ENCODE measurements at regions of chr3 and their contacts with region 1.

Region 1: GRCh38 chr3:157159762-157160657 is at the start of gene CCNL1:
- DNase-seq: peak; percentile 92
- CTCF ChIP-seq: no peak

Region 2: GRCh38 chr3:156943430-156943829 is 216.6 kb before region 1 on chr3:
- CTCF ChIA-PET with region 1: no interaction called
- POLR2A ChIA-PET with region 1: no interaction called
- DNase-seq: no peak
- CTCF ChIP-seq: no peak

Region 3: DNA sequence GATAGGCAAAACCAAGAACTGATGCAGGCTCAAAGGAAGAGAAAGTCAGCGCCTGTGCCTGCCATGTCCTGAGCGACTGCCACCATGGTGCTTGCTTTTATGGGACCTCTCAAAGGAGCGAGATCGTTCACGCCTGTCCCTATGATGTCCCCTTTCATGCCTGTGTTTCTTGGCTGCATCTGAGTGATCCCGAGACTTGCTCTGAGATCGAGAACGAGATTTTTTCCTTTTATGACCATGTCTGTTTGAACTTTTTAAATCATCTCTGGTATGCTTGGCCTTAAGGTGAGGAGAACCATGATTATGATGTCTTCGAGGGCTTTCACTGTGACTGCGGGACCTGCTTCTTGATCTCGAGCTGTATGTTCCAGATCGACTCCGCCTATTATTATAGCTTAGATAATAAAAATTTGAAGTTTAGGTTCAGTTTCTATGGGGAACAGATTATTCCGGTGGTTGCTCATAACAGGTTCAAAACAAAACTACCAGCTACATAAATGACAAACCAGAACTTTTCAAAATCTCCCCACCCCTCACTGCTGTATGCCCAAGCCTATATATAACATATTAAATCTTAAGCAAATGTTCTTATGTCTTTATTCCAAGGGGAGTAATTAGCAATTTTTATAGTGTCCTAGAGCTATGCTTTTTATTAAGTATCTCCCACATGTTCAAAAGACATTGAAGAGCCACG is 11.7 kb before region 1 on chr3:
- CTCF ChIA-PET with region 1: interaction called, 4 read pairs
- POLR2A ChIA-PET with region 1: interaction called, 11 read pairs
- DNase-seq: no peak
- CTCF ChIP-seq: no peak

Region 4: DNA sequence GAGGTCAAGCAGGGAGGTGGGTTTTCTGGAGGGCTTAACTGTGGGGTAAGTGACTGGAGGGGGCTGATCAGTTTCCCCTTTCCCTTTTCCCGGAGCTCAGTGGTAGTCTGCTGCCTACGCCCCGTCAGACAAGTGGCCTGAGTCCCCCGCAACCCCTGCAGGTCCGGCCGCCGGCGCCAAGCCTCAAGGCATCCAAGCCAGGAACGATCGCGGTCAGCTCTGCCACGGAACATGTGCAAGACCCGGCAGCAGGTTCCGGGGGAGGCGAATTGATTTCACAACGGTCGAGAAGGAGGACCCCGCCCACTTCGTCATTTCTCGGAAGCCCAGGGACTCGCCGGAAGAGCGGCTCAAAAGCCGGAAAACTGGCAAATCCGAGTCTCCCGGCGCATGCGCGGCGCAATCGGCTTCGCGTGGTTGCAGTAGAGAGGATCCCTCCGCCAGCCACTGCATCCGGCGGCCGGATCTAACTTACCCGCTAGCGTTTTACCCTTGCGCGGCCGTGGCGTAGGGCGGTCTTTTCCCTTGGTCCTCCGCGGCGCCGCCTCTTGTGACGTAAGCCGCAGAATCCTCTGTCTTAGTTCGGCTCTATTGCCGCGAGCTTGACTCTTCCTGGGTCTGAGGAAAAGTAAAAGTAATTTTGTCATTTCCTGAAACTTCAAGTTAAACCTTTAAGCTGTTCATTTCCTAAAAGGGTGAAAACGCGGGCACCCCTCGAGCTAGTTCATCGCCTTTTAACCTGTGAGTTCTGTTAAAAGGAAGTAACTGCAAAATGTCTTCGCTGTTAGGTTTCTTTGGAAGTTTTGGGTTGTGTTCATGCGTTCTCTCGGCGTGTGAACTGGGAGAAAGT is 14.9 kb after region 1 on chr3:
- CTCF ChIA-PET with region 1: interaction called, 95 read pairs
- POLR2A ChIA-PET with region 1: interaction called, 73 read pairs
- DNase-seq: peak; percentile 96
- CTCF ChIP-seq: no peak

Region 5: DNA sequence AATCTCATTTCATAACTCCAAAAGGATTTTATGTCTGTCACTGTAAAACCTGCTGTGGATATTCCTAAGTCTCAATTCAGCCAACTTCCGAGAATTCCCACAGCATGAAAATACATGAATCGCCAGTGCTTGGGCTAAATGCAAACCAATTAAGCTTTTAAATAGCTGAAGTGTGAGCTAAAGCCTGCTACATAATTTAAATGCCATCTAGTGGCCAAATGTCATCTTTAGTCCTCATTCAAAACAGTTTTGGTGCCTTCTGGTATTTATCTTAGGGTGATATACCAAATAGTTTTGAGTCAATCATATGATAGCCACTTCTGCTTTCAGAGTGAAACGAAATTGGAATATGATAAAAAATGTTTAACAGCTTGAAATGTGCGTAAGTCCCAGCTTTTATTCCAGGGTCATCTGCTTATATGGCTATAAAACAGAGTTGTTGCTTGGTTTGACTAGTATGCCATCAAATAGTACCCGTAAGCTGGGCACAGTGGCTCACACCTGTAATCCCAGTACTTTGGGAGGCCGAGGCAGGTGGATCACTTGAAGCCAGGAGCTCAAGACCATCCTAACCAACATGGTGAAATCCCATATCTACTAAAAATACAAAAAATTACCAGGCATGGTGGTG is 41.8 kb after region 1 on chr3:
- CTCF ChIA-PET with region 1: interaction called, 33 read pairs
- POLR2A ChIA-PET with region 1: no interaction called
- DNase-seq: peak; percentile 60
- CTCF ChIP-seq: peak; percentile 57

Region 6: GRCh38 chr3:157239082-157239704 is 79.2 kb after region 1 on chr3:
- CTCF ChIA-PET with region 1: interaction called, 10 read pairs
- POLR2A ChIA-PET with region 1: no interaction called
- DNase-seq: peak; percentile 70
- CTCF ChIP-seq: peak; percentile 94

Measured in GM10248 (cell line).